ENCODE measurements at regions of chr12 and their contacts with region 1.

Region 1: DNA sequence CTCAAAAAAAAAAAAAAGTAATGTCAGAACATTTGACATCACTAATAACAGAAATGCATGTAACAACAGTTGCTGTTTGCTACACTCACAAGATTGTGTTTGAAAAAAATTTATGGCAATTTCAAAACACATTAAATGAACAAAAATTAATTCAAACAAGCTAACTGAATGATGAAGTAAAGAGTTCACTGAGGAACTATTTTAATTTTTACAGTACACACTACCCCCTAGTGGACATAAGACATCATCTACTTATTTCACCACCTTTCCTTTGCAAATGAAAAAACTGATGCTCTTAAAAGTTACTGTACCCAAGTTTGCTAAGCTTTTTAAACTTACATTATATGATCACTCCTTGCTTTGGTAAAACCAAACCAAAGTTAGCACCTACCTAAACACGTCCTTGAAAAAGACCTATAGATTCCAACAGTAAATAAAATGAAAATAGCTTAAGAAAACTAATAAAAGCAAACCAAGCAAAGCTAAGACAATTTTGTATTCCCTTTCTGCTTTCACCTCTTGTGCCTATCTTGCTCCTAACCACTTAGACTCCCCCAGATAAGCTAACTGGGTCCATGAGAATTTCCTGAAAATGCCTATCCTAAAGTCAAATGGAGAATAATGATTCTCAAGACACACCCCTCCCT is 22.2 kb downstream of the UBE2N start:
- DNase-seq: peak; percentile 41
- H3K4me3 ChIP-seq: no peak overlapping the region
- H3K27ac ChIP-seq: peak overlapping the region in 1 of 2 experiments; percentile 47; a peak in 2 of 4 replicates
- H3K4me1 ChIP-seq: peaks cover 7 to 24% of the 10 kb centered on the region in 2 experiments; a peak in 3 of 4 replicates
- H3K27me3 ChIP-seq: no peaks in the 10 kb centered on the region
- CTCF ChIP-seq: peak; percentile 77
- EP300 ChIP-seq: no peak
- RAD21 ChIP-seq: peak; percentile 58

Region 2: DNA sequence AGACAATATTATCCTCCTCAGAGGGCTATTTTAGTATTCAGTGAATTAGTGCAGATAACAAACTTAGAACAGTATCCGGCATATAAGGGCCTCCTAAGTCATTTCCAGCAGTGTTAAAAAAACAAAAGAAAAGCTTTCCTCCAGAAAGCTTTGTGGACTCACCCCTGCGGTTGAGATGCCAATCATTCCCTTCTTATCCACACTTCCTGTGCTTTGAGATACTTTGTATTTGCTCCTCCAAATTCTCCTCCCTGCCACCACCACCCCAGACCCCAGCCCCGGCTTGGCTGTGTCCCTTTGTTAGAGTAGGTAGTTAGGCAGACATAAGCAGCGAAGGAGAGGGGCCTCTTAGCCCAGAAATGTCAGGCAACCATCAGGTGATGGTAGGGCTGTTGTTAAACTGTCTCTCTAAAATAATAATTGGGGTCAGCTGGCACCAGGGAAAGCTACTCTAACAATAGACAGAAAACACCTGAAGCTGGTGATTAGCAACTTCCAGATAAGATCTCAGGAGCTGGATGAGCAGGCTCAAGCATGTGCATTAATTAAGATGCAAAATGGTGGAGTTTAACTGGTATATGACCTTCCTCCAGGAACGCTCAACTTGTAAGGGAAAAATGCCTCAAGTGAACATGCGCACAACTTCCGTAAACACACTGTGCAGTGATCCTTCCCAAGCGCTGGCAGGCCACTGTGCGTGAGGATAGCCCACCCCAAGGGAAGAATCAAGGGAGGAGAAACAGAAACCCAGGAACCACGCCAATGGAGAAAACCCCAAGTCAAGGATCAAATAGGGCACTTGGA is 338.3 kb before region 1 on chr12:
- CTCF ChIA-PET with region 1: no interaction called
- POLR2A ChIA-PET with region 1: no interaction called
- DNase-seq: no peak
- H3K4me3 ChIP-seq: no peak overlapping the region
- H3K27ac ChIP-seq: peak overlapping the region in 1 of 2 experiments; percentile 17; a peak in 1 of 4 replicates
- H3K4me1 ChIP-seq: peaks cover 0 to 10% of the 10 kb centered on the region in 2 experiments; a peak in 1 of 4 replicates
- H3K27me3 ChIP-seq: no peaks in the 10 kb centered on the region
- CTCF ChIP-seq: no peak
- EP300 ChIP-seq: no peak
- RAD21 ChIP-seq: no peak

Region 3: GRCh38 chr12:93397412-93397811 is 22.1 kb before region 1 on chr12:
- CTCF ChIA-PET with region 1: interaction called, 15 read pairs
- POLR2A ChIA-PET with region 1: interaction called, 3 read pairs
- DNase-seq: no peak
- H3K4me3 ChIP-seq: no peak overlapping the region
- H3K27ac ChIP-seq: peak overlapping the region in 1 of 2 experiments; percentile 16; a peak in 1 of 4 replicates
- H3K4me1 ChIP-seq: no peaks in the 10 kb centered on the region
- H3K27me3 ChIP-seq: no peaks in the 10 kb centered on the region
- CTCF ChIP-seq: no peak
- EP300 ChIP-seq: no peak
- RAD21 ChIP-seq: no peak

Region 4: DNA sequence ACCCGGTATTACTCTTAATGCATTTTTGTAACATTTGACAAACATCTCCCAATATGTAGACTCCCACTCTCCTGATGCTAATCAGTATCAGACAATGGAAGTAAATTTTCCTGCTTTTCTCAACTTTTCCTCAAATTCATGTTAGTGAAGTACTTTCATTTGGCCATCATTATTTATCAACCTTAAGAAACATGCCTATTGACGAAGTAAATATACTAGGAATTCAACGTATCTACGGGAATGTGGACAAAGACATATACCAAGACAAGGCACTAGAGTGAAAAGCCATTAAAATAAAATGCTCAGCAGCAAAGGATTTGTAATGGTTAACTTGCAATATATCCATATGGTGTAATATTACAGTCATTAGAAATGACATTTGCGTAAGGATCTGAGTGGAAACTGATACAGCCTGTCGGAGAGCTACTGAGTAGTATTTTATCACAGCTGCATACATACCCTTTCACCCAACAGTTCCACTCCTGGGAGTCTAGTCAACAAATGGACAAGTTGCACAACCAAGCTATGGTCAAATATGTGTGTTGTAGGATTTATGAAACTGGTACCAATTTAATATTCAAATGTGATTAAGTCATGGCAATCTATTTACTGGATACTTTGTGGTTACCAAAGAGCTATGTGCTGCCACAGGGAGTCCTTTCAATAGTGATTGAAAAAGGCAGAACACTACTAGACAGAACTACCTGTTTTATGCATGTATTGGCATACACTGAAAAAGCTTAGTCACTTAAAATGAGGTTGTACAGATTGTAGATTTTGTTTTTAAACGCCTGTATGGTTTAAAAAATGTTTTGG is 15.3 kb before region 1 on chr12:
- CTCF ChIA-PET with region 1: interaction called, 31 read pairs
- POLR2A ChIA-PET with region 1: interaction called, 3 read pairs
- DNase-seq: no peak
- H3K4me3 ChIP-seq: no peak overlapping the region
- H3K27ac ChIP-seq: peak overlapping the region; percentile 16 to 23; a peak in 3 of 4 replicates
- H3K4me1 ChIP-seq: peaks cover 0 to 10% of the 10 kb centered on the region in 2 experiments; a peak in 3 of 4 replicates
- H3K27me3 ChIP-seq: no peaks in the 10 kb centered on the region
- CTCF ChIP-seq: no peak
- EP300 ChIP-seq: no peak
- RAD21 ChIP-seq: no peak

Region 5: GRCh38 chr12:93434256-93434865 is 14.8 kb after region 1 on chr12:
- CTCF ChIA-PET with region 1: interaction called, 17 read pairs
- POLR2A ChIA-PET with region 1: interaction called, 10 read pairs
- DNase-seq: no peak
- H3K4me3 ChIP-seq: no peak overlapping the region
- H3K27ac ChIP-seq: peak overlapping the region in 1 of 2 experiments; percentile 37; a peak in 2 of 4 replicates
- H3K4me1 ChIP-seq: peaks cover 7 to 15% of the 10 kb centered on the region in 2 experiments; a peak in 2 of 4 replicates
- H3K27me3 ChIP-seq: no peaks in the 10 kb centered on the region
- CTCF ChIP-seq: no peak
- EP300 ChIP-seq: no peak
- RAD21 ChIP-seq: no peak

Region 6: GRCh38 chr12:93441617-93442410 is 22.3 kb after region 1 on chr12 and contains the start of gene UBE2N:
- CTCF ChIA-PET with region 1: interaction called, 16 read pairs
- POLR2A ChIA-PET with region 1: interaction called, 3 read pairs
- DNase-seq: peak; percentile 98
- H3K4me3 ChIP-seq: peak within 1 kb of the TSS; percentile 83 to 91
- H3K27ac ChIP-seq: peak within 1 kb of the TSS; percentile 84 to 95
- H3K4me1 ChIP-seq: peaks cover 10 to 14% of the 10 kb centered on the region in 2 experiments; a peak in 3 of 4 replicates
- H3K27me3 ChIP-seq: no peaks in the 10 kb centered on the region
- CTCF ChIP-seq: no peak
- EP300 ChIP-seq: no peak; a peak in 2 of 4 replicates
- RAD21 ChIP-seq: no peak
- polyA plus RNA-seq, gene UBE2N: 102 and 121 TPM in 2 replicates